ENCODE measurements at regions of chr20 and their contacts with region 1.

Region 1: GRCh38 chr20:44217342-44218092 is 6.9 kb upstream of the OSER1 start:
- DNase-seq: peak; percentile 79 to 91 (median 86)
- H3K4me3 ChIP-seq: peak overlapping the region in 6 of 7 experiments; percentile 27 to 65 (median 40)
- H3K27ac ChIP-seq: no peak overlapping the region
- H3K4me1 ChIP-seq: peaks cover 18 to 32% (median 29%) of the 10 kb centered on the region in 4 experiments
- H3K27me3 ChIP-seq: no peaks in the 10 kb centered on the region

Region 2: DNA sequence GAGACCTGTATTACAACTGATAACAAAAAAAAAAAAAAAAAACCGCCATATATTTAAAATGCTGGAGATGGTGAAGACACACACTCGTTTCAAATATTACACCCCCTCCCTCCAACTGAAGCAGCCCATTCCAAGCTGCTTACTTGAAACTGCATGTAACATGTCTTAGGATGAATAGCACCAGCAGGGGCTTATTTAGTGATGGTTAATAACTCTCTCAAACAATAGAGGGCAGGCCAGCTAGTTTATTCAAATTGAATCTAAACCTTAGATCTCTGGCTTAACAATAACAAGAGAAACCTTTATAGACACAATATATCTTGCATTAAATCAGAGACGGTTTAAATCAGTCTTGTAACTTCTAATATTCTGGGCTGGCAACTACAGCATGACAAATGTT is 21.2 kb before region 1 on chr20:
- CTCF ChIA-PET with region 1: interaction called, 14 read pairs
- POLR2A ChIA-PET with region 1: no interaction called
- DNase-seq: peak; percentile 35 to 75 (median 63)
- H3K4me3 ChIP-seq: no peak overlapping the region
- H3K27ac ChIP-seq: no peak overlapping the region
- H3K4me1 ChIP-seq: peaks cover 3 to 15% (median 8%) of the 10 kb centered on the region in 4 experiments
- H3K27me3 ChIP-seq: peaks cover 0 to 2% (median 0%) of the 10 kb centered on the region in 5 experiments

Region 3: DNA sequence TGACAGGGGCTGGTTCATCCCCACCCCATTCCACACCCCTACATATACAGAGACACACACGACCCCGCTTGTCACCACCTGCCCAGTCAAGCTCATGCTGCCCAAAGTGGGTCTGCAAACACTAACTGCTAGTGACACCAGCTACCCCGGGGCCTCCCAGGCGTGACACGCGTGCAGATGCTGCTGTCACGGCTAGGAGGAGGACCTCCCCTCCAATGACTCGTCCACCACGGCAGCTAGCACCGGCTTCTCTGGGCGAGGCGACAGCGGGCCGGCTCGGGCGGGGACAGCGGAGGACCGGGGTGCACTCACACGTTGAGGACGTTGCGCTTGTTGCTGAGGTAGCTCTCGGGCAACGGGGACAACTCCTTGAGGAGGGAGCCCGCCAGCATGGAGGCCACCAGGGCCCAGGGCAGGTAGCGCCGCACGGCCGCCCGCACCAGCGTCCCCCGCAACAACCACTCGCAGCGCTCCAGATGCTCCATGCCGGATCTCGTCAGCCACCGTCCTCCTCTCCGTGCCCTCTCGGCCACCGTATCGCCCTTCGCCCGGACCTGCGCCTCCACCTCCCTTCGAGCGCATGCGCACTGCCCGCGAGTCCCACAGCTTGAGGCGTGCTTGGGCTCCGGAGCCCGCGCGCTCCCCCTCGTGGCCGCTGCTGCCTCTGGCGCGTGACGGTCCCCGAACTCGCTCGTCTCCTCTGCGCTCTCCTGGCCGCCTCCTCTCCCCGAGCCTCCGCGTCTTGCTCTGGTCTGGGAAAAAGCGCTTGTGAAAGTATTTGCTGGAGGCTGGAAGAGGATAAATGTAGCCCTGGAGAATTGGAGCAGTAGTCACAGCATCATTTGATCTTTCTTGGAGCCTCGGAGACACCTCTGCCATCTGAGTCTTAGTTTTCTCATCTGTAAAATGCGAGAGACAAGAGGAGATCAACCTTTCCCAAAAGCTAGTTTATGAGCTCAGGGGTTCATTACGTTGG is 93.4 kb after region 1 on chr20 and contains the start of gene FITM2:
- CTCF ChIA-PET with region 1: interaction called, 166 read pairs
- POLR2A ChIA-PET with region 1: no interaction called
- DNase-seq: peak; percentile 95 to 97 (median 96)
- H3K4me3 ChIP-seq: peak within 1 kb of the TSS; percentile 62 to 90 (median 80)
- H3K27ac ChIP-seq: peak within 1 kb of the TSS in 1 of 2 experiments; percentile 19
- H3K4me1 ChIP-seq: peaks cover 0 to 14% (median 13%) of the 10 kb centered on the region in 4 experiments
- H3K27me3 ChIP-seq: no peaks in the 10 kb centered on the region

Region 4: GRCh38 chr20:44388466-44389023 is 171.0 kb after region 1 on chr20:
- CTCF ChIA-PET with region 1: interaction called, 62 read pairs
- POLR2A ChIA-PET with region 1: no interaction called
- DNase-seq: peak; percentile 51 to 67 (median 63)
- H3K4me3 ChIP-seq: no peak overlapping the region
- H3K27ac ChIP-seq: no peak overlapping the region
- H3K4me1 ChIP-seq: peaks cover 0 to 9% (median 1%) of the 10 kb centered on the region in 4 experiments
- H3K27me3 ChIP-seq: peaks cover 0 to 14% (median 5%) of the 10 kb centered on the region in 5 experiments

Region 5: GRCh38 chr20:44723391-44723790 is 505.9 kb after region 1 on chr20:
- CTCF ChIA-PET with region 1: no interaction called
- POLR2A ChIA-PET with region 1: no interaction called
- DNase-seq: peak; percentile 23 to 60 (median 58)
- H3K4me3 ChIP-seq: no peak overlapping the region
- H3K27ac ChIP-seq: no peak overlapping the region
- H3K4me1 ChIP-seq: peaks cover 0 to 12% (median 7%) of the 10 kb centered on the region in 4 experiments
- H3K27me3 ChIP-seq: no peaks in the 10 kb centered on the region